ENCODE measurements at regions of chr1 and their contacts with region 1.

Region 1: GRCh38 chr1:182397771-182398393 is 2.6 kb downstream of the TEDDM1 start:
- DNase-seq: no peak
- ATAC-seq: no peak
- H3K4me3 ChIP-seq: no peak overlapping the region
- H3K27ac ChIP-seq: no peak overlapping the region
- H3K4me1 ChIP-seq: no peaks in the 10 kb centered on the region
- CTCF ChIP-seq: no peak
- EP300 ChIP-seq: no peak
- POLR2A ChIP-seq: no peak
- RAD21 ChIP-seq: no peak

Region 2: DNA sequence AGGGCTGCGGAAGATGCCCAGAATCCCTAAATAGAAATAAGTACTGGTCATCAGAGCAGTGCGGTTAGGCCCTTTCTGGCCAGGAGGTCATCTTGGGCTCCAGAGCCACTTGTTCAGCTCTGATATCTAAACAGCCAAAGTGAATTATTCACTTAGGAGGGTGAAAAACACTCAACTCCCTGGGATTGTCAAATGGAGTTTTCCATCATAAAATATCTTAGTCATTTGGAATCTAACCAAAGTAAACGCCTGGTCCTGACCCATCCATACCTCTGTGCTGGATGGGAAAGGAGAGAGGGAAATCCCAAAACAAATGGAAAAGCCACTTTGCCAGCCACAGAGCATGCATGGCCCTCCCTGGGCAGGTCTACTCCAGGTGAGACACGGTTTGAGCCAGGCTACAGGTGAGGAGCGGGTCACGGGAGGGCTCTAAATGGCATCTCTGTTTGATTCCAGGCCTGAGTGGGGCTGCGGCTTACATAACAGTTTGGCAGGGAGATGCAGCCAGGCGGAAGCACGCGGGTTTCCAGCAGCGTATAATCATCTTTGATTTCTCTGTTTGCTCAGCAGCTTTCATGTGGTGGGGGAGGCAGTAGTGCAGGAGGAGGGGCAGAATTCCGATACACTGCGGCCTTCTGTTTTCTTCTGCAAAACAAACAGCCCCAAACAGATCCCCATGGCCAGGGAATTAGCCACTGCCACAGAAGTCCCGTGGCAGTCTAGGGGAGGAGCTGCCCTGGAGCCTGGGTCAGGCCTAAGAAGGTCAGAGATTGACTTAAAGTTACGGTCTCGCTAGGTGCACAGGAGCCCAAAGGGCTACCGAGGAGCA is 277.3 kb before region 1 on chr1:
- CTCF ChIA-PET with region 1: interaction called, 11 read pairs
- POLR2A ChIA-PET with region 1: no interaction called
- DNase-seq: peak; percentile 62 to 83
- ATAC-seq: peak; percentile 88 to 91
- H3K4me3 ChIP-seq: no peak overlapping the region
- H3K27ac ChIP-seq: peak overlapping the region; percentile 67 to 76; a peak in 5 of 6 replicates
- H3K4me1 ChIP-seq: peaks cover 30% of the 10 kb centered on the region
- CTCF ChIP-seq: no peak
- EP300 ChIP-seq: peak; percentile 37 to 44; a peak in 2 of 5 replicates
- POLR2A ChIP-seq: no peak
- RAD21 ChIP-seq: peak in 1 of 2 experiments; percentile 17; a peak in 1 of 5 replicates

Region 3: GRCh38 chr1:182181167-182181682 is 216.7 kb before region 1 on chr1:
- CTCF ChIA-PET with region 1: no interaction called
- POLR2A ChIA-PET with region 1: no interaction called
- DNase-seq: no peak
- ATAC-seq: no peak
- H3K4me3 ChIP-seq: no peak overlapping the region
- H3K27ac ChIP-seq: no peak overlapping the region
- H3K4me1 ChIP-seq: peaks cover 21% of the 10 kb centered on the region
- CTCF ChIP-seq: no peak
- EP300 ChIP-seq: no peak
- POLR2A ChIP-seq: no peak
- RAD21 ChIP-seq: no peak

Region 4: GRCh38 chr1:182348961-182349747 is 48.7 kb before region 1 on chr1:
- CTCF ChIA-PET with region 1: interaction called, 10 read pairs
- POLR2A ChIA-PET with region 1: no interaction called
- DNase-seq: no peak
- ATAC-seq: no peak
- H3K4me3 ChIP-seq: no peak overlapping the region
- H3K27ac ChIP-seq: no peak overlapping the region
- H3K4me1 ChIP-seq: no peaks in the 10 kb centered on the region
- CTCF ChIP-seq: no peak
- EP300 ChIP-seq: no peak
- POLR2A ChIP-seq: no peak
- RAD21 ChIP-seq: no peak